Activated T-helper 2 cell treated with anti-CD3 and anti-CD28 coated beads, Interferon-gamma antibody, Interleukin-2, Interleukin-4, amounts not matched to agents 10 μg/mL and 5 μg/mL and 100 μg/mL, durations not matched to agents 14 hours and 24 hours and 36 hours (primary cell): ENCODE measurements at regions of chr6 and their contacts with region 1.

Region 1: DNA sequence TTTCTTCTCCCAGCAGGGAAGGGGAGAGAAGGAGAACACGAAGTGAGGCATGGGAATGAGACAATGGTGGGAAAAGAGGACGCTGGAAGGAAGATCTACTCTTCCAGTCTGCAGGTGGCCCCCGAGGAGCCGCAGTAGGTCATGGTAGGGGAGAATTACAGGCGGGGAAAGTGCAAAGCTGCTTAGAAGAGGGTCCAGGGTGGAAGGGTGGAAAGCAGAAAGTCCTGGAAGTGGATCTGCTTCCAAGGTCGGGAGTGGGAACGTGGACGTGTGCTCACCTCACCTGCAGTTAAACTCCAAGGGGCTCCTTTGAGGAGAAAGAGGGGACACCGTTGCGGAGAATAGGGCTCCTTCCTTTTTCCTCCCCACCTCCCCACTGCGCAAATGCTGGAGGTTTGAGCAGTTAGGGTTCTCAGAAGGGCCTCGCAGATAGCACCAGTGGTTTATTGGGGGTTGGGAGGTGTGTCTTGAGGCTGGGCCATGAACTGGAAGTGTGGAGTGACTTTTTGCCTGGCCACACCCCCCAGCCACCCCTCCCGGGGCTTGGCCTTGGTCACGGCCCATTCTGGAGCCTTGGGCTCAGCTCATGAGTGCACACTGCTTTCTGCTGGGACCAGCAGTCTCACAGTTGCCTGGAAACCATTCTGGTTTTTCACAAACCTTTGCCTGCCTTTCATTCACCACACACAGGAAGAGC is 100.4 kb upstream of the MLN start:
- DNase-seq: peak; percentile 86
- H3K4me3 Mint-ChIP-seq: peak overlapping the region; percentile 22
- H3K27ac Mint-ChIP-seq: peak overlapping the region; percentile 83
- H3K4me1 Mint-ChIP-seq: peaks cover 45% of the 10 kb centered on the region
- H3K27me3 Mint-ChIP-seq: no peaks in the 10 kb centered on the region

Region 2: GRCh38 chr6:33788694-33789549 is 115.3 kb before region 1 on chr6 and contains the start of gene LEMD2:
- intact Hi-C with region 1: loop called (anchors 5 kb)
- DNase-seq: peak; percentile 91
- H3K4me3 Mint-ChIP-seq: peak within 1 kb of the TSS; percentile 92
- H3K27ac Mint-ChIP-seq: peak within 1 kb of the TSS; percentile 96
- H3K4me1 Mint-ChIP-seq: peaks cover 34% of the 10 kb centered on the region
- H3K27me3 Mint-ChIP-seq: peaks cover 7% of the 10 kb centered on the region
- total RNA-seq, gene LEMD2: 61.7 and 66.2 TPM in 2 replicates

Region 3: GRCh38 chr6:33851959-33852358 is 52.2 kb before region 1 on chr6:
- intact Hi-C with region 1: loop called (anchors 1 kb)
- DNase-seq: no peak
- H3K4me3 Mint-ChIP-seq: no peak overlapping the region
- H3K27ac Mint-ChIP-seq: no peak overlapping the region
- H3K4me1 Mint-ChIP-seq: peaks cover 9% of the 10 kb centered on the region
- H3K27me3 Mint-ChIP-seq: peaks cover 35% of the 10 kb centered on the region

Region 4: GRCh38 chr6:33914645-33915044 is 10.4 kb after region 1 on chr6:
- intact Hi-C with region 1: loop called (anchors 1 kb)
- DNase-seq: peak; percentile 28
- H3K4me3 Mint-ChIP-seq: peak overlapping the region; percentile 13
- H3K27ac Mint-ChIP-seq: no peak overlapping the region
- H3K4me1 Mint-ChIP-seq: peaks cover 22% of the 10 kb centered on the region
- H3K27me3 Mint-ChIP-seq: peaks cover 9% of the 10 kb centered on the region